CD4-positive, alpha-beta memory T cell (primary cell): ENCODE measurements at regions of chrX and their contacts with region 1.

Region 1: DNA sequence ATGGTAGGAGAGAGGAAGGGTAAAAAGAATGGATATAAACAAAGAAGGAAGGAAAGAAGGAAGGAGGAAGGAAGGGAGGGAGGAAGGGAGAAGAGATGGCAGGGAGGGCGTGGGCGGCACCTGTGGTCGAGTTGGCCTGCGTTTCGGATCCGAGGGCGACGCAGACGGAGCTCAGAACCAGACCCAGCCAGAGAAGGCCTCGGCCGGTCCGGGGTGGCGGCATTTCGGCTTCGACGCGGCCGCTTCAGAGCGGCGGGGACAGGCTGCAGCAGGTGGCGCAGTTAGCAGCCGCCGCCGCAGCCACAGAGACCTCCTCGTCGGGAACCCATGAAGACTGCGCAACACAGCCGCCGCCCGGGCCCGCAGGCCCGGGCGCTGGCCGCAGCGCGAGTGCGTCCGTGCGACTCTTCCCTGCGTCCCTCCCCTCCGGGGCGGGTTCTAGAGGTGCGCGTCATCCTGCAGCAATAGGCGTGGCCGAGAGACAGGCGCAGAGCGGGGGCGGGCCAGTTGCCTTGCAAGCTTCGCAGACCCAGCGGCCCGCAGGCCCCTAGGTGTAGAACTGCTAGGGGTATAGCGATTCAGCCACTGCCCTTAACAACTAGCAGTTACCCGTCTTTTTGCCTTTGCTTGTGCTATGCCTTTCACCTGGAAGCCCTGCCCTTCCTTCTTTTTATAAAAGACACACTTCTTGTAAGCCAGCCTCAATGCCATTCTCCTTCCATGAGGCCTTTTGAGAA is at the start of gene IDS:
- DNase-seq: peak; percentile 81 to 92 (median 87)
- H3K4me3 ChIP-seq: peak within 1 kb of the TSS; percentile 73 to 84
- H3K4me3 Mint-ChIP-seq: peak within 1 kb of the TSS; percentile 85 to 99 (median 96)
- H3K27ac ChIP-seq: peak within 1 kb of the TSS; percentile 95
- H3K27ac Mint-ChIP-seq: peak within 1 kb of the TSS in 6 of 7 donors; percentile 98 to 100 (median 99)
- H3K4me1 ChIP-seq: peaks cover 37% of the 10 kb centered on the region
- H3K4me1 Mint-ChIP-seq: peaks cover 9 to 39% (median 26%) of the 10 kb centered on the region in 4 donors
- H3K27me3 ChIP-seq: no peaks in the 10 kb centered on the region
- H3K27me3 Mint-ChIP-seq: peaks cover 0 to 3% of the 10 kb centered on the region in 2 donors
- total RNA-seq, gene IDS: 185 to 196 TPM

Region 2: DNA sequence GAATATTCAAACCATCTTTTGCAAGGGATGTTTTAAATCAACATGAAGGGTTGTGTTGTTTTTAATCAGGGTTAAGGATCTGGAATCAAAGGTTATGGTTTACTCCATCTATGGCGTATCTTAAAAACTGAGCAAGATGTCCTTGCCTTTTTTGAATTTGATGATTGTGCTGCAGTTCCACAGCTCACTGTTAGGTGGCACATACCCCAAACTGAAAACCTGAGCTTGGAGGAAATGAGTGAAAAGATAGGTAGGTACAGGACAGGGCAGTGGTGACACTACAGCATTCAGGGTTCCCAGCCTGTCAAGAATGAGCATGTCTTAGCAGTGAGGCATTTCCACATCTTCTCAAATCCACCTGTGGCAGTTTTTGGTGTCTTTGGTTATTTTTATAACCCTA is 22.6 kb after region 1 on chrX:
- CTCF ChIA-PET with region 1: interaction called, 33 read pairs
- POLR2A ChIA-PET with region 1: interaction called, 112 read pairs
- intact Hi-C with region 1: loop called (anchors 1 kb)
- DNase-seq: peak; percentile 54 to 61 (median 57)
- H3K4me3 ChIP-seq: no peak overlapping the region
- H3K4me3 Mint-ChIP-seq: peak overlapping the region in 3 of 8 donors; percentile 13 to 57 (median 33)
- H3K27ac ChIP-seq: no peak overlapping the region
- H3K27ac Mint-ChIP-seq: peak overlapping the region; percentile 66 to 92 (median 89)
- H3K4me1 ChIP-seq: peaks cover 31% of the 10 kb centered on the region
- H3K4me1 Mint-ChIP-seq: peaks cover 5 to 33% (median 13%) of the 10 kb centered on the region in 4 donors
- H3K27me3 ChIP-seq: no peaks in the 10 kb centered on the region
- H3K27me3 Mint-ChIP-seq: no peaks in the 10 kb centered on the region

Region 3: GRCh38 chrX:149539283-149540130 is 34.4 kb after region 1 on chrX:
- CTCF ChIA-PET with region 1: interaction called, 20 read pairs
- POLR2A ChIA-PET with region 1: interaction called, 80 read pairs
- intact Hi-C with region 1: loop called (anchors 1 kb)
- DNase-seq: peak; percentile 82 to 94 (median 91)
- H3K4me3 ChIP-seq: peak overlapping the region in 1 of 2 donors; percentile 67
- H3K4me3 Mint-ChIP-seq: peak overlapping the region; percentile 88 to 93 (median 90)
- H3K27ac ChIP-seq: peak overlapping the region; percentile 64
- H3K27ac Mint-ChIP-seq: peak overlapping the region; percentile 90 to 99 (median 97)
- H3K4me1 ChIP-seq: peaks cover 11% of the 10 kb centered on the region
- H3K4me1 Mint-ChIP-seq: peaks cover 6 to 16% (median 12%) of the 10 kb centered on the region in 4 donors
- H3K27me3 ChIP-seq: no peaks in the 10 kb centered on the region
- H3K27me3 Mint-ChIP-seq: no peaks in the 10 kb centered on the region

Region 4: GRCh38 chrX:149825424-149825823 is 320.3 kb after region 1 on chrX:
- CTCF ChIA-PET with region 1: no interaction called
- POLR2A ChIA-PET with region 1: interaction called, 3 read pairs
- intact Hi-C with region 1: loop called (anchors 5 kb)
- DNase-seq: peak in 3 of 5 donors; percentile 12 to 29 (median 21)
- H3K4me3 ChIP-seq: no peak overlapping the region
- H3K4me3 Mint-ChIP-seq: no peak overlapping the region
- H3K27ac ChIP-seq: no peak overlapping the region
- H3K27ac Mint-ChIP-seq: peak overlapping the region in 1 of 7 donors; percentile 12
- H3K4me1 ChIP-seq: peaks cover 13% of the 10 kb centered on the region
- H3K4me1 Mint-ChIP-seq: peaks cover 15 to 36% (median 22%) of the 10 kb centered on the region in 4 donors
- H3K27me3 ChIP-seq: no peaks in the 10 kb centered on the region
- H3K27me3 Mint-ChIP-seq: peaks cover 0 to 6% of the 10 kb centered on the region in 2 donors

Region 5: DNA sequence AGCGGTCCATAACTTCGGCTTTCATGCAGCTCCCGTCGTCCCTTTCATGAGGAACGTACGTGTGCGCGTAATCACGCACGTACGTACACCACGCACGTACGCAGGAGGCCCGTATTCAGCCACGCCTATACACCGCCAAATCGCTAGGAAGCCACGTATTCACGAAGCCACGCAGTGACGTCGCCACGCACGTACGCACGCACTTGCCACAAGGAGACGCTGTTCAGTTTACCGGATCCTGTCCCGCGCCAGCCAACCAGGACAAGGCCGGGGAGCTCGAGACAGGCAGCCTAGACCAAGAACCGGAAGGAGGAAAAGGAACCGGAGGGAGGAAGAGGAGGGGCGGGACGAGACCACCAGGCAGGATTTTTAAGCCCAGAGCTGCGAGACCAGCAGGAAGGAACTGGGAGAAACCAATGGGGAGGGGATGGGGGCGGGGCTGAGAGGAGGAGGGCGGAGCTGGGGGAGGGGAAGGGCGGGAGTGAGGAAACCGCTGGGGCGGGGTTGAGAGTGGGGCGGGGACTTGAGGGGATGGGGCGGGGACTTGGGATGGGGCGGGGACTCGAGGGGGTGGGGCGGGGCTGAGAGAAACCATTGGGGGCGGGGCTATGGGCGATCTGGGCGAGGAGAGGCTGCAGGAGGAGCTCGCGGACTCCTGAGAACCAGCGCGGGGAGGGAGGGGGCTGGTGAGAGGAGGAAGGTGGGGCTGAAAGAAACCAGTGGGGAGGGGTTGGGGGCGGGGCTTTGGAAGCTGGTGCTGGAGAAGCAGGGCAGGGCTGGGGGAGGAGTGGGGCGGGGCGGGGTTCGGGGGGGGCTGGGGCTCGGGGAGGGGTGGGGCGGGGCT is 433.6 kb after region 1 on chrX and contains the start of gene EOLA2:
- CTCF ChIA-PET with region 1: interaction called, 3 read pairs
- POLR2A ChIA-PET with region 1: interaction called, 18 read pairs
- intact Hi-C with region 1: no loop called
- DNase-seq: peak; percentile 89 to 97 (median 95)
- H3K4me3 ChIP-seq: peak within 1 kb of the TSS; percentile 22 to 66
- H3K4me3 Mint-ChIP-seq: peak within 1 kb of the TSS; percentile 80 to 97 (median 93)
- H3K27ac ChIP-seq: peak within 1 kb of the TSS; percentile 90
- H3K27ac Mint-ChIP-seq: peak within 1 kb of the TSS; percentile 93 to 100 (median 99)
- H3K4me1 ChIP-seq: peaks cover 11% of the 10 kb centered on the region
- H3K4me1 Mint-ChIP-seq: peaks cover 3 to 16% (median 8%) of the 10 kb centered on the region in 4 donors
- H3K27me3 ChIP-seq: no peaks in the 10 kb centered on the region
- H3K27me3 Mint-ChIP-seq: no peaks in the 10 kb centered on the region
- total RNA-seq, gene EOLA2: 38.1 to 41.1 TPM